ENCODE measurements at regions of chr14 and their contacts with region 1.

Region 1: GRCh38 chr14:77314043-77314442 is 6.6 kb downstream of the POMT2 start:
- DNase-seq: no peak
- ATAC-seq: peak; percentile 78
- H3K4me3 Mint-ChIP-seq: no peak overlapping the region
- H3K27ac Mint-ChIP-seq: peak overlapping the region; percentile 97
- H3K4me1 Mint-ChIP-seq: peaks cover 34% of the 10 kb centered on the region
- H3K27me3 Mint-ChIP-seq: no peaks in the 10 kb centered on the region
- CTCF ChIP-seq: no peak

Region 2: GRCh38 chr14:77043177-77043983 is 270.7 kb before region 1 on chr14:
- CTCF ChIA-PET with region 1: no interaction called
- POLR2A ChIA-PET with region 1: no interaction called
- DNase-seq: no peak
- ATAC-seq: no peak
- H3K4me3 Mint-ChIP-seq: no peak overlapping the region
- H3K27ac Mint-ChIP-seq: no peak overlapping the region
- H3K4me1 Mint-ChIP-seq: peaks cover 66% of the 10 kb centered on the region
- H3K27me3 Mint-ChIP-seq: peaks cover 3% of the 10 kb centered on the region; the same call in 1 of the 2 replicates
- CTCF ChIP-seq: no peak

Region 3: GRCh38 chr14:77212943-77213678 is 100.9 kb before region 1 on chr14:
- CTCF ChIA-PET with region 1: interaction called, 10 read pairs
- POLR2A ChIA-PET with region 1: no interaction called
- DNase-seq: peak; percentile 87
- ATAC-seq: peak; percentile 98
- H3K4me3 Mint-ChIP-seq: no peak overlapping the region
- H3K27ac Mint-ChIP-seq: no peak overlapping the region
- H3K4me1 Mint-ChIP-seq: peaks cover 17% of the 10 kb centered on the region
- H3K27me3 Mint-ChIP-seq: peaks cover 3% of the 10 kb centered on the region; the same call in 1 of the 2 replicates
- CTCF ChIP-seq: peak; percentile 60; the same call in 1 of the 2 replicates

Region 4: DNA sequence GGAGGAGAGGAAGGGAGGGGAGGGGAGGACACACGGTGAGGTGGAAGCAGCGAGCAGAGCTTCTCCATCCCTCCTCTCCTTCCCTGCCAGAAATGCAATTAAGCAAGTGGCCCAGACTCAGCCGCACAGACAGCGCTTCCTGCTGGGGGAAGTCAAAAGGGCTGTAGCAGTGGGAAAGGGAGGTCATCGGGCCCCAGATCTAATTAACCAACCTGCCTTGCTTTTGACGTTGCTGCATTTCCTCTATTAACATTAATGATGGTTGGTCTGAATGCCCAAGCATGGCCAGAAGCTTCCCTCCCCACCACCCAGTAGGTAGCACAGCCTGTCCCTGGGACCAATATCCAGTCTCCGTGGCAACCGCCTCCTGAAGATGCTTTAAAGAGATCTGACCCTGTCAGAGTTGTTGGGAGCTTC is 38.4 kb before region 1 on chr14:
- CTCF ChIA-PET with region 1: interaction called, 19 read pairs
- POLR2A ChIA-PET with region 1: no interaction called
- DNase-seq: no peak
- ATAC-seq: peak; percentile 48
- H3K4me3 Mint-ChIP-seq: no peak overlapping the region
- H3K27ac Mint-ChIP-seq: no peak overlapping the region
- H3K4me1 Mint-ChIP-seq: peaks cover 3% of the 10 kb centered on the region; the same call in 1 of the 2 replicates
- H3K27me3 Mint-ChIP-seq: peaks cover 33% of the 10 kb centered on the region
- CTCF ChIP-seq: no peak

Region 5: DNA sequence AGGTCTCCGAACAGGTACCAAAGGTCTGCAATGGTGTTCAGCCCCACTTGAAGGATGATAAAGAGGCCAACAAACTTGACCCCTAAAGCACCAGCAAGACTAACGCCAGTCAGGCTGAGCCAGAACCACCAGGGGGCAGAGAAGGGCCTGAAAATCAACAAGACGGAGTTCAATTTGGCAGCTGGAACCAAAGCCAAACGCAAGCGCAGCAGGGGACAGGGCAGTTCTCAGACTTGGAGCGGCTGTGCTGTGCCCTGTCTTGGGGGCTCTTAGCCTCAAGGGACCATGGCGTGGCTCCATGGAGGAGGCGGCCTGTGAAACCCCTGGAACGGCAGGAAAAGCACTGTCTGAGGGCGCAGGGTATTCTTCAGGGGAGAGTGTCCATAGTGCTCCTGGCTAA is 12.9 kb before region 1 on chr14:
- CTCF ChIA-PET with region 1: interaction called, 59 read pairs
- POLR2A ChIA-PET with region 1: no interaction called
- DNase-seq: peak; percentile 90
- ATAC-seq: peak; percentile 97
- H3K4me3 Mint-ChIP-seq: no peak overlapping the region
- H3K27ac Mint-ChIP-seq: no peak overlapping the region
- H3K4me1 Mint-ChIP-seq: peaks cover 2% of the 10 kb centered on the region; the same call in 1 of the 2 replicates
- H3K27me3 Mint-ChIP-seq: no peaks in the 10 kb centered on the region
- CTCF ChIP-seq: peak; percentile 80

Region 6: DNA sequence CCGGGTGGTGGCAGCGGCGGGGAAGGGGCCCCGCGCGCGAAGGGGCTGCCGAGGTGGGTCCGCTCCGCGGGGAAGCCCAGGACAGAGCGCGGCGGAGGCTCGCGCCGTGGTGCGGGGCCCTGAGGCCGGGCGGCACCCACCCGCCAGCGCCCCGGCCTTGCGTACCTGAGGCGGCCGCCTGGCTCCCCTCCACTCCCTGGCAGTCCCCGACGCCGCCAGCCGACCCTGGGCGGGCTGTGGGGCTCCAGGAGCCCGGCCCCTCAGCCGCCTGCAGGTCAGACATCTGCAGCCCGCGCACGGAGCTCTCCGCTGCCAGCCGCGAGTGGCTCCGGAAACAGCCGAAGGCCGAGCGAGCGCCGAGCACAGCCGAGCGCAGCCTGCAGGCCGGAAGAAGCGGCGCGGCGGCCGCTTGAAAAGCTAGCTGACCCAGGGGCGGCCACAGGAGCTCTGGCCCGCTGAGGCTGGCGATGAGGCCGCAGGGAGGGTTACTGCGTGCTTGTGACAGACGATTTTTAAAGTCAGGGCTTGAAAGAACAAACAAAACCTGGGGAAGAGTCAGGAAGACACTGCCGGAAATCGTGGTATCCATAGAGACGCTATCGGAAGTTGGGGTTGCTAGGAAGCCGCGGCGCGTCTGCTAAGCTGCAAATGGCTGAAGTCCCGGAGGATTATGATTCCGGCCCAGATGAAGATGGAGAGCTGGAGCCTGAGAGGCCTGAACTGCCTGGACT is 62.9 kb after region 1 on chr14 and contains the starts of genes SAMD15 and TMED8:
- CTCF ChIA-PET with region 1: interaction called, 19 read pairs
- POLR2A ChIA-PET with region 1: interaction called, 3 read pairs
- DNase-seq: peak; percentile 85
- ATAC-seq: peak; percentile 99
- H3K4me3 Mint-ChIP-seq: peak within 1 kb of the TSS; percentile 85
- H3K27ac Mint-ChIP-seq: no peak within 1 kb of the TSS
- H3K4me1 Mint-ChIP-seq: peaks cover 9% of the 10 kb centered on the region
- H3K27me3 Mint-ChIP-seq: no peaks in the 10 kb centered on the region
- CTCF ChIP-seq: no peak
- total RNA-seq, gene SAMD15: 0.27 to 0.42 TPM (median 0.30 TPM) in 3 replicates
- total RNA-seq, gene TMED8: 12.8 to 14.2 TPM (median 13.4 TPM) in 3 replicates